ENCODE measurements at regions of chr16 and their contacts with region 1.

Region 1: GRCh38 chr16:56317998-56318826 is 107.1 kb downstream of the AMFR start:
- DNase-seq: peak; percentile 45
- H3K4me3 ChIP-seq: peak overlapping the region; percentile 47
- H3K27ac ChIP-seq: no peak overlapping the region
- H3K27me3 ChIP-seq: peaks cover 18% of the 10 kb centered on the region
- CTCF ChIP-seq: peak; percentile 95

Region 2: DNA sequence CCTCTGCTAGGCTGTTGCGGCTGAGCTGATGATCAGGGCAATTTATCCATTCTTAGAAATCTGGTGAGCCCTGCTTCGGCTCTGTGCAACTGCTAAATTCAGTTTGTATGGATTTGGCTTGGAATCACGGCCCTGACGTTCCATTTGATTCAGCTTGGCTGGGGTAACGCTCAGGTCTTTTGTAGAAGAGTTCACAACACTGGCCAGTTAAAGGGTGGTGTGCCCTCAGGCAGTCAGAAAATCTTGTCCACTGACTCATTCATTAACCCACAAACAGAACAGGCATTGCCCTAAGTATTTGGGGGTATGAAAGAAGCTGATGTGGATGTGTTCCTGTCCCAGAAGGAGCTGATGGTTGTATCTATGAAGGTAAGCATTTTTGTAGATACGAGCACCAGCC is 73.0 kb before region 1 on chr16:
- CTCF ChIA-PET with region 1: no interaction called
- POLR2A ChIA-PET with region 1: no interaction called
- DNase-seq: no peak
- H3K4me3 ChIP-seq: no peak overlapping the region
- H3K27ac ChIP-seq: no peak overlapping the region
- H3K27me3 ChIP-seq: no peaks in the 10 kb centered on the region
- CTCF ChIP-seq: no peak

Region 3: DNA sequence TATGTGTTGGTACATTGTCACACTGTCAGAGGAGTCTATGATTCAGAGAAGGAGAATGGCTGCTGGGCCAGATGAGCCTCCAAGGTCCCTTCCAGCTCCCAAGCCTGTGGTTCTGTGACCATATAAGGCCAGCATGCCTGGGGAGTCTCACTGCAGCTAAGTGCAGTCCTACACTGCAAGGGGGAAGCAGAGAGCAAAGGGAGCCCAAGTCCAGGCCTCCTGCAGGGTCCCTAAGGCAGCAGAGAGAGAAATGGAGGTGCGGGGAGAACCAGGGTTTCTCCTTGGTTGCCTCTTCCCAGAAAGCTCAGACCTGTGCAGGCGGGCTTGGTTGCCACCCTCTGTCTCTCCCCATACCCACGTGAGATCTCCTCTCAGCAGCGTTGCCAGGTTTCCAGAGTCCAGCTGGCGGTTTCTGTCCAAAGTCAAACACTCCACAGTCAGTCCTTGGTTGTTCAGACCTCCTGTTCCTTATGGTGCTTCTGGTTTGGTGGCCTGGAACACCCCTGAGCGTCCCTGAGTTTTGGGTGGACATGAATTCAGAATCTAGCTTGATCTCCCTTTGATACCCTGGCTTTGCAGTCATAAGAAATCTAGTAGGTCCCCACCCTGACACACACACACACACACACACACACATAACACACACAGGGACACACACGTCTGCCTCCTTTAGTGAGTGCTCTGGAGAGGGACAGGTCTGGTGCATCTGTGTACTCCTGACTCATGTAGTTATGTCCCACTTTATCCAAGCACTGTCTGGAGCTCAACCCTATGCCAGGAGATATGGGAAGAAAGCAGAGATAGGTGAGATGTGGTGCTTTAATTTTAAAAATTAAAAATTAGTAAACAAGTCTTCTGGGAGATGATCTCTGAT is 48.2 kb before region 1 on chr16:
- CTCF ChIA-PET with region 1: interaction called, 25 read pairs
- POLR2A ChIA-PET with region 1: no interaction called
- DNase-seq: peak; percentile 42
- H3K4me3 ChIP-seq: no peak overlapping the region
- H3K27ac ChIP-seq: peak overlapping the region; percentile 11
- H3K27me3 ChIP-seq: no peaks in the 10 kb centered on the region
- CTCF ChIP-seq: peak; percentile 51

Region 4: DNA sequence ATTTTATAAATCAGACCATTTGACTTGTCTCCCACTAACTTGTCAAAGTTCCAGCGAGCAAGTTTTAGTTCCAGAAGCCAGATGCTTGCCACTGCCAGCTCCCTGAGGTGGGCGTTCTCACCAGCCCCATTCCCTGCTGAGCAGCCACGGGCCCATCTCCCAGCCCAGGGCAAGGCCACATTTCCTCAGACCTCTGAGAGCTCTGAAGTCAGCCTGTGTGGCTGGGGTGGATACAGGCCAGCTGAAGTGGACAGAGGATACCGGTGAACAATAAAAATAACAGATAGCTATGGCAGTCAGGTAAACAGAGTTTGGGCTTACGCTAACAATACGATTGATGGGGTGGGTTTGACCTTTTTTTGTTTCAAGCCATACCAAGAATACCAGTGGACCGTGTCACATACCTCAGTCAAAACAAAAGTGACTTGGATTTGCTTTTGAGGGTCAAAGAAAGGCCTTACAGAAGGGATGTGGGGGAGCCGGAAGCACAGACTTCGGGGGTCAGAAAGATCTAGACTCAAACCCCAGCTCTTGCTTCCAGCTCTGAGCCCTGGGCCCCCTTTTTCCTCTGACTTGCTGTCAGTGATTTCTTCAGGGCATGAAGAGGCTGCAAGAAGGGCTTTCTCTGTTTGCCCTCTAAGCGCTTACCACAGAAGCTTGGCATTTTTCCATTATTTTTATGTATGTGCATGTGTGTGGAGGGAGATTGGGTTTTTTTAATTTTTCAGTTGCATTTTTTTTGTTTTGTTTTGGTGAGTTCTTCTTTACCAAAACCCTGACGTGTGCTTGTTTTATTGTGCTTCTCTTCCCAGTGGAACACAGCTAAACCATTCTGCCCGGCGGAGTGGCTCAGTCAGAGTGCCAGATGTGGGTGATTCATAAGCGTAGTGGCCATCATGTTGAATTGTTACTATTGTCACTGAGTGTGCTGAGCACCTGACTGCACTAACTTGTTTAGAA is 17.0 kb before region 1 on chr16:
- CTCF ChIA-PET with region 1: interaction called, 35 read pairs
- POLR2A ChIA-PET with region 1: no interaction called
- DNase-seq: no peak
- H3K4me3 ChIP-seq: no peak overlapping the region
- H3K27ac ChIP-seq: no peak overlapping the region
- H3K27me3 ChIP-seq: peaks cover 12% of the 10 kb centered on the region
- CTCF ChIP-seq: no peak

Region 5: GRCh38 chr16:56343661-56344526 is 25.7 kb after region 1 on chr16:
- CTCF ChIA-PET with region 1: interaction called, 16 read pairs
- POLR2A ChIA-PET with region 1: no interaction called
- DNase-seq: no peak
- H3K4me3 ChIP-seq: no peak overlapping the region
- H3K27ac ChIP-seq: no peak overlapping the region
- H3K27me3 ChIP-seq: no peaks in the 10 kb centered on the region
- CTCF ChIP-seq: no peak

Region 6: GRCh38 chr16:56513972-56514371 is 195.8 kb after region 1 on chr16:
- CTCF ChIA-PET with region 1: no interaction called
- POLR2A ChIA-PET with region 1: no interaction called
- DNase-seq: peak; percentile 29
- H3K4me3 ChIP-seq: no peak overlapping the region
- H3K27ac ChIP-seq: no peak overlapping the region
- H3K27me3 ChIP-seq: no peaks in the 10 kb centered on the region
- CTCF ChIP-seq: peak; percentile 81

Measured in AG04450 (cell line).